ENCODE measurements at regions of chr7 and their contacts with region 1.

Region 1: GRCh38 chr7:5237286-5237685 is 45.5 kb upstream of the SLC29A4 start:
- DNase-seq: no peak
- H3K4me3 ChIP-seq: no peak overlapping the region
- H3K4me3 Mint-ChIP-seq: no peak overlapping the region
- H3K27ac Mint-ChIP-seq: no peak overlapping the region
- H3K4me1 ChIP-seq: peaks cover 13% of the 10 kb centered on the region
- H3K4me1 Mint-ChIP-seq: no peaks in the 10 kb centered on the region
- H3K27me3 ChIP-seq: no peaks in the 10 kb centered on the region
- H3K27me3 Mint-ChIP-seq: no peaks in the 10 kb centered on the region
- CTCF ChIP-seq: no peak

Region 2: DNA sequence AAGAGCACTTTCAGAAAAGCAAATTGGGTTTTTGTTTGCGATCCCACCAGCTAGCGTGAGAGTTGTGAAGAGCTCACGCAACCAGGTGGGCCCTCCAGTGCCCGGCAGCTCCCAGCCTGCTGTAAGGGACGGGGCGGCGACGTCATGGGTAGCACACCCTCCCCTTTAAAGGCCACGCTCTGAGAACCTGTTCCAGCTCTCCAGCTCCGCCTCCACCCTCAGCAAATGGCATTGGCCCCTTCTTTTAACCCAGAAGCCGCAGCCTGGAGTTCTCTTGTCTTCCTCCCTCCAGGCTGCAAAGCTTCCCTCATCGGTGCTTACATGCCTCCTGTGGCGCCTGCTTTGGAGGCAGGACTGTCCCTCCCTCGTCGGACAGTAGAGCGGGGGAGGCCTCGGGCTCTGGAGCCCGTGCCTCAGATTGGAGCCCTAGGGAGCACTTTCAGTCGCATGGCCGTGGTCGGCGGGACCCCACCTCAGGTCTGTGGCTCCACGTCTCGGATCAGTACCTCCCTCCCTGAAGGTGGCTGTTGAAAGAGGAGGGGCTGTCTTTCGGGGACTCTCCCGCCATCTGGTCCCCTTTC is 14.4 kb before region 1 on chr7:
- CTCF ChIA-PET with region 1: interaction called, 6 read pairs
- POLR2A ChIA-PET with region 1: interaction called, 14 read pairs
- intact Hi-C with region 1: loop called (anchors 1 kb)
- DNase-seq: peak; percentile 82 to 84
- H3K4me3 ChIP-seq: no peak overlapping the region
- H3K4me3 Mint-ChIP-seq: peak overlapping the region; percentile 62
- H3K27ac Mint-ChIP-seq: peak overlapping the region; percentile 95
- H3K4me1 ChIP-seq: peaks cover 28% of the 10 kb centered on the region
- H3K4me1 Mint-ChIP-seq: peaks cover 36% of the 10 kb centered on the region
- H3K27me3 ChIP-seq: no peaks in the 10 kb centered on the region
- H3K27me3 Mint-ChIP-seq: no peaks in the 10 kb centered on the region
- CTCF ChIP-seq: no peak

Region 3: GRCh38 chr7:5284304-5285281 is 47.3 kb after region 1 on chr7:
- CTCF ChIA-PET with region 1: interaction called, 15 read pairs
- POLR2A ChIA-PET with region 1: no interaction called
- intact Hi-C with region 1: loop called (anchors 1 kb)
- DNase-seq: peak; percentile 59 to 71
- H3K4me3 ChIP-seq: peak overlapping the region; percentile 63
- H3K4me3 Mint-ChIP-seq: peak overlapping the region; percentile 54
- H3K27ac Mint-ChIP-seq: peak overlapping the region; percentile 33
- H3K4me1 ChIP-seq: peaks cover 7% of the 10 kb centered on the region
- H3K4me1 Mint-ChIP-seq: peaks cover 8% of the 10 kb centered on the region
- H3K27me3 ChIP-seq: no peaks in the 10 kb centered on the region
- H3K27me3 Mint-ChIP-seq: no peaks in the 10 kb centered on the region
- CTCF ChIP-seq: peak; percentile 16 to 53

Region 4: GRCh38 chr7:5354460-5355232 is 117.4 kb after region 1 on chr7:
- CTCF ChIA-PET with region 1: no interaction called
- POLR2A ChIA-PET with region 1: interaction called, 11 read pairs
- intact Hi-C with region 1: no loop called
- DNase-seq: peak; percentile 17 to 65
- H3K4me3 ChIP-seq: no peak overlapping the region
- H3K4me3 Mint-ChIP-seq: peak overlapping the region; percentile 8
- H3K27ac Mint-ChIP-seq: peak overlapping the region; percentile 21
- H3K4me1 ChIP-seq: 0 out of 2 replicates have a peak, but pooled peaks cover 4% of the 10 kb centered on the region
- H3K4me1 Mint-ChIP-seq: peaks cover 14% of the 10 kb centered on the region
- H3K27me3 ChIP-seq: no peaks in the 10 kb centered on the region
- H3K27me3 Mint-ChIP-seq: no peaks in the 10 kb centered on the region
- CTCF ChIP-seq: no peak

Region 5: DNA sequence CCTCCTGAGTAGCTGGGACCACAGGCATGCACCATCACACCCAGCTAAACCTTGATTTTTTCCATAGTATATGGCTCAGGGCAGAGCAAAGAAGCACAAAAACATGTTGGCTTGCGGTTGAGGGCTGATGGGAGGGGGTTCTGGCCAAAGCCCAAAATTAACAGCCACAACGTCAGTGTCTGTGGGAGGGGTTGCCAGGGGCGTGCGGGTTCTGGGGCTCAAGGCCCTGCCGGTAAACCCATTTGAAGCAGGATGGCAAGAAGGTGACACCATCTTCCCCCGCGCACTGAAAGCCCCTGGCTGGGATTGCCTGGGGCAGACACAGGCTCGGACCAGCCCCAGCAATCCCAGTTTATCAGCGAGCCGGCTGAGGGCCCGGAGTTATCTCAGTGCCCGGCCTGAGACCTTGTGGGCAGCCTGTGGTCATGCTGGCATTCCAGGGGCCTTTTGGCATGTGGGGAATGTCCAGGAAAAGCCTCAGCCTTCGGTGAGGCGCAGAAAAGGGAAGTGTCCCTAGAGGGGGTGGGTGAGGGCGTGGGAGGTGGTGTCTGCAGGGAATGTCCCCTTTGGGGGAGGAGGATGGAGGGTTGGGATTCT is 354.1 kb after region 1 on chr7:
- CTCF ChIA-PET with region 1: no interaction called
- POLR2A ChIA-PET with region 1: no interaction called
- intact Hi-C with region 1: no loop called
- DNase-seq: peak; percentile 64 to 81
- H3K4me3 ChIP-seq: no peak overlapping the region
- H3K4me3 Mint-ChIP-seq: peak overlapping the region; percentile 88
- H3K27ac Mint-ChIP-seq: no peak overlapping the region
- H3K4me1 ChIP-seq: peaks cover 21% of the 10 kb centered on the region
- H3K4me1 Mint-ChIP-seq: peaks cover 9% of the 10 kb centered on the region
- H3K27me3 ChIP-seq: no peaks in the 10 kb centered on the region
- H3K27me3 Mint-ChIP-seq: no peaks in the 10 kb centered on the region
- CTCF ChIP-seq: no peak

Measured in Caco-2 (cell line).